Spleen (tissue), 13 donors: ENCODE measurements at regions of chr10 and their contacts with region 1.

Region 1: GRCh38 chr10:122435212-122435827 is 19.1 kb upstream of the ARMS2 start:
- DNase-seq: no peak
- H3K4me3 ChIP-seq: no peak overlapping the region
- H3K27ac ChIP-seq: no peak overlapping the region
- H3K4me1 ChIP-seq: no peaks in the 10 kb centered on the region
- H3K27me3 ChIP-seq: no peaks in the 10 kb centered on the region
- CTCF ChIP-seq: peak in 9 of 11 experiments; percentile 22 to 72 (median 66)
- POLR2A ChIP-seq: no peak

Region 2: GRCh38 chr10:122298598-122299301 is 136.6 kb before region 1 on chr10:
- intact Hi-C with region 1: loop called (anchors 5 kb)
- DNase-seq: peak; percentile 83
- H3K4me3 ChIP-seq: peak overlapping the region in 1 of 8 donors; percentile 35
- H3K27ac ChIP-seq: no peak overlapping the region
- H3K4me1 ChIP-seq: peaks cover 0 to 7% (median 4%) of the 10 kb centered on the region in 6 donors
- H3K27me3 ChIP-seq: peaks cover 0 to 29% (median 0%) of the 10 kb centered on the region in 7 donors
- CTCF ChIP-seq: peak; percentile 74 to 93 (median 87)
- POLR2A ChIP-seq: no peak

Region 3: GRCh38 chr10:122342293-122343134 is 92.8 kb before region 1 on chr10:
- intact Hi-C with region 1: loop called (anchors 5 kb)
- DNase-seq: no peak
- H3K4me3 ChIP-seq: no peak overlapping the region
- H3K27ac ChIP-seq: no peak overlapping the region
- H3K4me1 ChIP-seq: peaks cover 0 to 9% (median 0%) of the 10 kb centered on the region in 6 donors
- H3K27me3 ChIP-seq: no peaks in the 10 kb centered on the region
- CTCF ChIP-seq: peak; percentile 49 to 83 (median 75)
- POLR2A ChIP-seq: no peak